ENCODE measurements at regions of chr1 and their contacts with region 1.

Region 1: DNA sequence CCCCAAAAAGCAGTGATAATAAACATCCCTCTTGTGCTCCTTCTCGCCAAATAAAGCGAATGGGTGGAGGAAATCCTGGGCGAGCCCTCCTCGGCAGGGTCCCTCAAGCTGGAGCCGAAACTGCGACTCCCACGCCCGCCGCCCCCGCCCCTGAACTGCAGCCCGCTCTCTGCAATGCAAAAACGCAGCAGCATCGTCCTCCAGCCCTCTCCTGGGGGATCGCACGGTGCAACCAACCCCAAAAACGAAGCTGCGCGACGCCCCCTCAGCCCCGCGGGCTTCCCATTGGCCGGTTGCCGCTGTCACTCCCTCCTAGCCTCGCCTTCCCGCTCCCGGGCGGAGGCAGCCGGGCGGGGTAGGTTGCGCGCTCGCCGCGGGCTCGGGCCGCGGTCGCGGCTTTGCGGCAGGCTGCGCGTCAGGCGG is at the start of gene TMCC2:
- DNase-seq: peak; percentile 98

Region 2: DNA sequence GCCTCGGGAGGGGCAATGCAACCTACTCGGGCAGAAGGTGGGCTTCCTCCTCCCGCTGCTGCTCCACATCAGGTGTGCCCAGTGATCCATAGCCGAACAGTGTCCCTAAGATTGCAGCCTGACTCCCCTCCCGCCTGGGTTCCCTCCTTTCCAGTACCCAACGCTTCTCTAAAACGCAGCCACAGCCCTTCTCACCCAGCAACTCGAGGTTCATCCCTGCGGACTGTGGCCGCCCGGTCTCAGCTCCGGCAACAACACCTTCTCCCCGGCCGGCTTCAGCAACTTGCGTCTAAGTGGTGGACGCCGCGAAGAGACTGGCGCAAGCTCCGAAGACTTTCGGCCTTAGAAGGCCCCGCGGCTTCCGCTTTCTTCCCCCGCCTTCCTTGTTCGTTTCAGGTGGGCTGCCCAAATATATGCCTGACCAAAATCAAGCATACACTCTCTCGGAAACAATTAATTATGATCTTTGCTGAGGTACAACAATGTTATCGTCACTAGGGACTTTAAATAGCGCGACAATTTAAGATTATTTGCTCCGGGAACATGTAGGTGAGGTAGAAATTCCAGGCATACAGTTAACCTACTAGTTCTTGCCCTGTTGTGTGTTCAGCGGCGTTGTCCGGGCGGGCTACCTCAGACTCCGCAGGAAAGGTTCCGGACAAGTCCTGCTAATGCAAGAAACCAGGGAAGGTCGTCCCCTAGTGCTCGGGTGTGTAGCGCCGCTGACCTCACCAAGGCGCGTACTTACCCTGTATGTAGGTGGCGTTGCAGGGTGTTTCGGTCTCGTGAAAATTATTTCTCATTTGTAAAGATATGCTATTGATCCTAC is 105.7 kb before region 1 on chr1 and contains the start of gene RBBP5:
- CTCF ChIA-PET with region 1: no interaction called
- POLR2A ChIA-PET with region 1: interaction called, 14 read pairs
- DNase-seq: peak; percentile 95

Region 3: GRCh38 chr1:205211169-205211838 is 16.3 kb before region 1 on chr1 and contains the start of gene DSTYK:
- CTCF ChIA-PET with region 1: interaction called, 3 read pairs
- POLR2A ChIA-PET with region 1: interaction called, 16 read pairs
- DNase-seq: peak; percentile 94

Region 4: GRCh38 chr1:205255941-205256780 is 28.6 kb after region 1 on chr1:
- CTCF ChIA-PET with region 1: interaction called, 34 read pairs
- POLR2A ChIA-PET with region 1: interaction called, 16 read pairs
- DNase-seq: peak; percentile 90

Region 5: DNA sequence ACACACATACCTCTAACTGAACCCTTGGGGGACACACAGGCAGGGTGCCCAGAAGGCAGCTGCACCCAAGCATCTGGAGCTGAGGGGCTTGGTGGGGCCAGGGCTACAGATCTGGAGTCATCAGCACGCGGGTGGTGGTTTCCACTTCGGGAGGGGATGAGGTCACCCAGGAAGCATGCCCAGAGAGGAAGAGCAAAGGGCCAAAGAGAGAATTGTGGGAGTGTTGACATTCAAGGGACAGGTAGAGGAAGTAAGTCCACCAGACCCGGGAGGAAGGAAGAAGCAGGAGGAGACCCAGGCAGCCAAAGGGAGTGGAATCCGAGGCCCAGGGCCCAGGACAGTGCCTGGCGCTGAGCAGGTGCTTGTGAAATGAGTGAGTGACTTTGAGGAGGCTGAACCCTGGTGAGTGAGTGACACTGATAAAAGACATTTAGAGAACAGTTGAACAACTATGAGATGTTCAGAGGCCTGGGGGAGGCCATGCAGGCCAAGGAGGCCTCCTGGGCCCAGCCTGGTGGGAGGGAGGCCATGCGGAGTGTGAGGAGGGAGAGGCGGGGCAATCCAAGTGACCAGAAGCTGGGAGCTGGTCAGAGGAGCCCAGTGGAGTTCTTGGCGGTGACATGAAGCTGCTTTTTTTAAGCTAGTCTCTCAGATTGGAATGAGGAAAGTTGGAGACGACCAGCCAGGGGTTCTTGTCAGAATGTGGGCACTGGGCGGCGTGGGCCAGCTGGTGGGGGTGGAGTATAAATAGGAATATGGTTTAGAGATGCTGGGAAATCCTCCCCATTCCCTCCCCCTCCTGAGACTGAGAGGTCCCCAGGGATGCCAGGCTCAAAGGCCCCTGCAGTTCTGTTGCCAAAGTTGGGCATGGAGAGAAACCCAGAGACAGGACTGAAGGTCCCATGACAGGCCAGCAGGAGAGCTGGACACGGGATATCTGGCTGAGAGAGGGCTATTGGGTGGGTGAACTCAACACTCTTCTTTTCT is 284.8 kb after region 1 on chr1:
- CTCF ChIA-PET with region 1: no interaction called
- POLR2A ChIA-PET with region 1: no interaction called
- DNase-seq: no peak